GM12878 (cell line): ENCODE measurements at regions of chr4 and their contacts with region 1.

Region 1: GRCh38 chr4:5719350-5720055 is 8.5 kb downstream of the EVC start:
- DNase-seq: no peak
- ATAC-seq: peak; percentile 78
- H3K4me3 ChIP-seq: no peak overlapping the region; the same call in 1 of the 2 replicates
- H3K27ac ChIP-seq: no peak overlapping the region
- H3K4me1 ChIP-seq: peaks cover 3% of the 10 kb centered on the region; the same call in 1 of the 2 replicates
- H3K27me3 ChIP-seq: no peaks in the 10 kb centered on the region
- CTCF ChIP-seq: peak in 1 of 3 experiments; percentile 20; a peak in 3 of 6 replicates
- EP300 ChIP-seq: no peak
- POLR2A ChIP-seq: no peak
- RAD21 ChIP-seq: peak; percentile 40; the same call in 1 of the 2 replicates

Region 2: DNA sequence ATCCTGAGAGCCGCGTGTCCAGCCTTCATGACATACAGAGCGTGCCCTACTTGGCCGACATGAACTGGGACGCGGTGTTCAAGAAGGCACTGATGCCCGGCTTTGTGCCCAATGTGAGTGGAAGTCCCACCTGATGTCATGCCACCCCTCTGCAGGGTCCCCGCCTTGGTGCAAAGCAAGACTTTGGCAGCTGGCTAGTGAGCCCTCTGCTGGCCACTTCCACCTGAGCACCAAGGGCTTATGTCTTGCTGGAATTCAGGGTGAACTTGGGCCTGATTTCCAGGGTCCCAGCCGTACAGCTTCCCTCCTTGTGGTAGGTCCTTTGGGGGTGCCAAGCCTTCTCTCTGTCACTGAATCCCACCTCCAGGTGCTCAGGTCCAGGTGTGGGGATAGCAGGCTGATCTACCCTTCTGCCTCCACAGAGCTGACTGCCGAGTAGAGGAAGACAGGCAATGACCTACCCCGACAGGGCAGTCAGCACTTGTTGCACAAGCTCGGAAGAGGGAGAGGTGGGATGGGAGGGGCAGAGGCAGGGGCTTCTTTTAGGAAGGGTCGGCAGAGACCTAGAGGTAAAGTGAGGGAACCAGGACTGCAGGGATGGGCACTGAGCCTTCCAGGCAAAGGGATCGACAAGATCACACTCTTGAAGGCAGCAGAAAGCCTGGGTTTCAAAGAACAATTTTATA is 259.2 kb before region 1 on chr4:
- CTCF ChIA-PET with region 1: no interaction called
- POLR2A ChIA-PET with region 1: no interaction called
- RAD21 ChIA-PET with region 1: no interaction called
- SMC1A ChIA-PET with region 1: interaction called, 3 read pairs
- in situ Hi-C with region 1: no loop called
- intact Hi-C with region 1: loop called (anchors 5 kb)
- DNase-seq: no peak
- ATAC-seq: peak; percentile 63
- H3K4me3 ChIP-seq: no peak overlapping the region
- H3K27ac ChIP-seq: no peak overlapping the region
- H3K4me1 ChIP-seq: no peaks in the 10 kb centered on the region
- H3K27me3 ChIP-seq: no peaks in the 10 kb centered on the region
- CTCF ChIP-seq: peak; percentile 40 to 54 (median 46); a peak in 4 of 6 replicates
- EP300 ChIP-seq: no peak
- POLR2A ChIP-seq: no peak
- RAD21 ChIP-seq: peak; percentile 36; the same call in 1 of the 2 replicates